Right ventricle myocardium inferior (tissue), 1 donor: ENCODE measurements at regions of chr13 and their contacts with region 1.

Region 1: DNA sequence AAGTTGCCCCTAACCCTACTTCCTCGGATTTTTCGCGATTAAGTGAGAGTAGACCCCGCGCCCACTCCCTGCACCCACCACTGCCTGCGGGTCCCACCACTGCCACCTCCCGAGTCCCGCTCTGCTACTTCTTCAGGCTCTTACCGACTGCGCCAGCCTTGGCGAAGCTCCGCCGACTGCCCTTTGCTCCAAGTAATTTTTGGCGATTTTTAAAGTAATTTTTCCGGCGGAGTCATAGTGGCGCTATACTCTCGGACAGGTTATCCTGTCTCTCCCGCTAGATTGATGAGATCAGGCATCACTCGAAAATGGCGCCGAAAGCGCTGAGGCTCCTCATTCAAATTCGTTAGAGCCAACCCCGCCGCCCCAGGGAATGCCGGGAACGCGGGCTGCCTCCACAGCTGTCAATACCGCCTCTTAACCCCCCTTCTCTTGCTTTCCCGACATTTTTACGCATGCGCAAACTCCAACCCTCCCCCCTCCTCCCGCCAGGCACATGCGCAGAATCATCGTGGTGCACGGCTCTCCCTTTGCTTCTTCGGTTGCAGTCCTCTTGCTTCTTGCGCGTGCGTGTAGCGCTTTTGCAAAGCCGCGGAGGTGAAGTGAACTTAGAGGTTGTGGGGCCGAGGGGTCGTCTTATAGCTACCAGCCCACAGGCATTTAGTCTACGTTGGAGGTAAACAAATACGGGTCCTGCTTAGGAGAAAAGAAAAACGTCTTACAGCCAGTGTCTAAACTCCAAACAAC is 66.6 kb downstream of the KCNRG start:
- DNase-seq: peak; percentile 98
- ATAC-seq: peak; percentile 97

Region 2: GRCh38 chr13:49976314-49977258 is 105.3 kb before region 1 on chr13:
- intact Hi-C with region 1: loop called (anchors 5 kb)
- DNase-seq: peak; percentile 88
- ATAC-seq: peak; percentile 50

Region 3: DNA sequence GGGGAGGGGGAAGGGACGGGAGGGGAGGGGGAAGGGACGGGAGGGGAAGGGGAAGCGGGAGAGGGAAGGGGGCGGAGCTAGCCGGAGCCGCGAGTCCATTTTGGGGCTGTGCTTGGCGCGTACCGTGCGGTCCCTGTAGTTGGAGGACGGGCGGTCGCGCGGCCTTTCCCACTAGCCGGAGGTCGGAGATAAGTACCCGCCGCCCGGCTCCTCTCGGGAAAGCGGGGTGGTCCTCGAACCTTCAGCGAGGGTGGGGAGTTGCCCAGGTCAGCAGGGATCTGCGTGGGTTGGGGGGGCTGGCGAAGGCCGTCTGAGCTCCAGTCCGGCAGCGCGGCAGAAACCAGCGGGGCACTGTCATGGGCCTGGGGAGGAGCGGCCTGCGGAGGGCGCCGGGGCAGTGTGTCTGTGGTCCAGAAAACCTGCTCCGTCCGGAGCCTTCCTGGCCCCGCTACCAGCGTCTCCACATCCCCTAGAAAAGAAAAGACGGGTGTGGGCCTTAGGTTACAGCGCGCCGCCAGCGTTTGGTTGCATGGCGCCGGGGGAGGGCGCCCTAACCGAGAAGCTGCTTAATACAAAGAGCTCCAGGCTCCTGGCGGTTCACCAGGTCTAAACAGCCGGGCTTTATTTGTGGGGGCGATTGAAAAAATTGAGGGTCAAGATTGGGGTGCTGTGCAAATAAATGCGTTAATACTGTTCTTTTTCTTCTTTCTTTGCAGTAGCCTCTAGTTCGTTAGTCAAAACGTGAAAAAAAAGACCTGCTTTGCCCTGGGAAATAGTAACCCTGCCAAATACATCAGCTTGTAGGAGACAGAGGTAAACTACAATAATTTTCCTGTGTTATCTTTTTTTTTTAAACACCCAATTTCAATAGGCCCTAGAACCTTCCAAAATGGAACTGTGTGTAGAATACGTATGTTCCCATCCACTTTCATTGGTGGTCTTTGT is 84.6 kb before region 1 on chr13 and contains the start of gene TRIM13:
- intact Hi-C with region 1: loop called (anchors 1 kb)
- DNase-seq: peak; percentile 94
- ATAC-seq: peak; percentile 91
- total RNA-seq, gene TRIM13: 24.2 TPM

Region 4: GRCh38 chr13:50123862-50124536 is 42.1 kb after region 1 on chr13:
- intact Hi-C with region 1: loop called (anchors 2 kb)
- DNase-seq: no peak
- ATAC-seq: peak; percentile 92

Region 5: GRCh38 chr13:50911937-50912795 is 830.3 kb after region 1 on chr13:
- intact Hi-C with region 1: loop called (anchors 2 kb)
- DNase-seq: peak; percentile 92
- ATAC-seq: peak; percentile 30